AG04449 (cell line): ENCODE measurements at regions of chr3 and their contacts with region 1.

Region 1: DNA sequence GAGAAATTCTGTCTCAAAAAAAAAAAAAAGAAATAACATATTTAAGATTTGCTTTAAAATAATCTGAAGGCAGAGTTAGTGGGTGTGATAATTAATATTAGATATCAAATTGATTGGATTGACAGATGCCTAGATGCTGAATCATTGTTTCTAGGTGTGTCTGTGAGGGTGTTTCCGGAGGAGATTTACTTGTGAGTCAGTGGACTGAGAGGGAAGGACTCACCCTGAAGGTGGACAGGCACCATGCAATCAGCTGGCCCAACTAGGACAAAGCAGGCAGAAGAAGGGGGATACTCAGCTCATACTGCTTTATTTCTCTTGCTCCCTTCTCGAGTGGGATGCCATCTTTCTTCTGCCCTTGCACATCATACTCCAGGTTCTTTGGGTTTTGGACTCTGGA is 16.7 kb upstream of the RPL24 start:
- DNase-seq: no peak
- H3K4me3 ChIP-seq: no peak overlapping the region
- CTCF ChIP-seq: no peak

Region 2: DNA sequence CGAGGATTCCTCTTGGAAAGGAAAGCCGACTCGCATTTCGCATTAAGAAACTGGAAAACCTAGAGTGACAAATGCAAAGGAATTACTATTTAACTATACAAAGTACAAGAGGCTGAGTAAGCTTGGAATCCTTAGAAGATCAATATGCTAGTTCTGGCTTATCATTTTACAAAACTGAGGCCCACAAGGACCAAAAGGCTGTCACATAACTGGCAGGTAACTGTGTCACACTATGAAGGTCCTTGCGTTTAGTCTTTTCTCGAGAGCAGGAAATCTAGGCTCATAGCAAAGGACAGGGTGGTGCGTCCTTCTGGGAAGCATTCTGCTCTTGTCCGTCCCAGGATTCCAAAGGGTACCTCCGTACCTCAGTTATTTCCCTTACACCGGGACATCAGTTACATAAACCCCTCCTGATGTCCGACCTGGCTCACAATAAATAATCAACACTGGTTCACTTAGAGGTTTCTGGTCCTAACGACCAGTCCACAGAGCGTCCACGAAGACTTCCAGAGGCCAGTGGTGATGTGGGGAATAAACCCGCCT is 17.2 kb before region 1 on chr3:
- CTCF ChIA-PET with region 1: interaction called, 22 read pairs
- POLR2A ChIA-PET with region 1: no interaction called
- DNase-seq: no peak
- H3K4me3 ChIP-seq: peak overlapping the region; percentile 77
- CTCF ChIP-seq: no peak

Region 3: DNA sequence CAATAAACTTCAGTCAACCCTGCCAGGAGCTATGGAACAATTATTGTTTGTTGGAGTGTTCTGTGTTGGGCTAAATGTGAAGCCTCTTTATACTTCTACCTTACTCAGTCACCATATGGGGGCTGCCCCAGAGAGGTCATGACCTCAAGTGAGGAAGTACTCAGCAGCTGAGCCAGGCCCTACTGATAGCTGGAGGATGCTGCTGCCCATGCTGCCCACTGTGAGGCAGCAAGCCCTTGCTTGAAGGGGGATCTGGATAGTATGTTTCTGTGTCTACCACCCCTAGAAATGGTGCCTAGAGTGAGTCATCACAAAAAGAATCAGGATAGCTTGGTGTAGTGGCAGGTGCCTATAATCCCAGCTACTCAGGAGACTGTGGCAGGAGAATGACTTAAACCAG is 12.2 kb before region 1 on chr3:
- CTCF ChIA-PET with region 1: interaction called, 22 read pairs
- POLR2A ChIA-PET with region 1: no interaction called
- DNase-seq: no peak
- H3K4me3 ChIP-seq: no peak overlapping the region
- CTCF ChIP-seq: no peak